ENCODE measurements at regions of chr20 and their contacts with region 1.

Region 1: DNA sequence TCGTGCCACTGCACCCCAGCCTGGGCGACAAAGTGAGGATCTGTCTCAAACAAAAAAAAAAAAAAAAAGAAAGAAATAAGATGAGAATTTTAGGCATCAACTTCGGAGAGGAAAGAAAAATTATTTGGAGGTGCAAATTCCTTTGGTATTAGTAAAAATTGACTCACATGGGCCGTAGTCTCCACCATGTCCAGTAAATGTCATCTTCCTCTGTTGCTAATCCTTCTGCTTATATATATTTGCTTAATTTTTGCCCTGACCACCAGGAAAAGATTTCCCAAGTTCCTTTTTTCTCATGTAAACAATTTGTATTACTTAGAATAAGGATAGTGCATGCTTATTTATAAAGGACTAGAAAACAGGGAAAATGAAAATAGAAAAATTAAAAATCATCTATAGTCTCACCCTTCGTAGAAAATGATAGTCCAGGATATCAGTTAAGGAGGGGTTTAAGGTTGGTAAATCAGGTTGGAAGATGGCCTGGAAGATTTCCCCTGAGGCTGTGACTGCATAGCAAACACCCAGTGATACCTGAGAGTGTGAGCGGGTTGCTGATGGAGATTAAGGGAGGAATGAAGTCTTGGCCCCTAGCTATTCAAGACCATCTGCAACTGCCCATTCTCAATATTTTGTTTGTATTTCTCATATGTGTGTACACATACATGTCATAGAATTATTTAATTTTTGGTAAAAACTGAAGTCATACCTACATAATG is 240.8 kb downstream of the ZNF217 start:
- DNase-seq: no peak
- H3K4me3 ChIP-seq: no peak overlapping the region
- H3K27ac ChIP-seq: no peak overlapping the region
- H3K4me1 ChIP-seq: no peaks in the 10 kb centered on the region
- H3K27me3 ChIP-seq: no peaks in the 10 kb centered on the region
- CTCF ChIP-seq: no peak
- EP300 ChIP-seq: no peak
- POLR2A ChIP-seq: no peak

Region 2: GRCh38 chr20:53385941-53386767 is 33.3 kb after region 1 on chr20:
- in situ Hi-C with region 1: no loop called
- intact Hi-C with region 1: loop called (anchors 1 kb)
- DNase-seq: no peak
- H3K4me3 ChIP-seq: no peak overlapping the region
- H3K27ac ChIP-seq: no peak overlapping the region
- H3K4me1 ChIP-seq: no peaks in the 10 kb centered on the region
- H3K27me3 ChIP-seq: no peaks in the 10 kb centered on the region
- CTCF ChIP-seq: no peak
- EP300 ChIP-seq: no peak
- POLR2A ChIP-seq: no peak

Region 3: GRCh38 chr20:53480913-53481312 is 128.0 kb after region 1 on chr20:
- in situ Hi-C with region 1: no loop called
- intact Hi-C with region 1: no loop called
- DNase-seq: no peak
- H3K4me3 ChIP-seq: no peak overlapping the region
- H3K27ac ChIP-seq: no peak overlapping the region
- H3K4me1 ChIP-seq: no peaks in the 10 kb centered on the region
- H3K27me3 ChIP-seq: no peaks in the 10 kb centered on the region
- CTCF ChIP-seq: no peak
- EP300 ChIP-seq: no peak
- POLR2A ChIP-seq: no peak